K562 (cell line): ENCODE measurements at regions of chr3 and their contacts with region 1.

Region 1: DNA sequence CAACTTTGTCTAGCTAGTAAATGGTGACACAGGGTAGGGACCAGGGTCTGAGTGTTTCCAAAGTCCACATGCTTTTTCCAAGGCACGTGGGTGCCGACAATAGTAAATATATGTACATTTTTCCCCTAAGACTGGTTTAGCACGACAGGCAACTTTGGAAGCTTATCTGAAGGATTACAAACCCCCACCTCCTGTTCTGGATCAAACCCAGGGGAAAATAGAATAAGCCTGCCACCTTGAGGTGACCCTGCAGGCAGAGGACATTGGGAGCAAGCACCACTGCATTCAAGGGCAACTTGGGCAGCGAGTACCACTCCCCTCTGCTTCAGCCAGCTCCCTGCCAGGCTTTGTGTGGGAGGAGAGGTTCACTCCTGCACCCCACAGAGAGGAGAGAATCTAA is 44.8 kb downstream of the KBTBD12 start:
- DNase-seq: peak in 2 of 4 experiments; percentile 20 to 33
- ATAC-seq: 0 out of 3 replicates have a peak, but pooled peaks have one; percentile 42
- H3K4me3 ChIP-seq: no peak overlapping the region
- H3K27ac ChIP-seq: no peak overlapping the region
- H3K4me1 ChIP-seq: no peaks in the 10 kb centered on the region
- H3K27me3 ChIP-seq: peaks cover 0 to 7% of the 10 kb centered on the region in 2 experiments; a peak in 3 of 5 replicates
- CTCF ChIP-seq: peak; percentile 41 to 56 (median 50)
- EP300 ChIP-seq: no peak
- POLR2A ChIP-seq: no peak
- RAD21 ChIP-seq: peak; percentile 55 to 61; a peak in 3 of 4 replicates

Region 2: GRCh38 chr3:127011270-127011992 is 948.4 kb before region 1 on chr3:
- CTCF ChIA-PET with region 1: no interaction called
- POLR2A ChIA-PET with region 1: no interaction called
- in situ Hi-C with region 1: no loop called
- intact Hi-C with region 1: no loop called
- DNase-seq: peak in 1 of 4 experiments; percentile 16
- ATAC-seq: peak; percentile 79
- H3K4me3 ChIP-seq: no peak overlapping the region
- H3K27ac ChIP-seq: no peak overlapping the region; the same call in 2 of the 3 replicates
- H3K4me1 ChIP-seq: peaks cover 0 to 5% of the 10 kb centered on the region in 2 experiments; a peak in 1 of 5 replicates
- H3K27me3 ChIP-seq: no peaks in the 10 kb centered on the region
- CTCF ChIP-seq: no peak
- EP300 ChIP-seq: no peak
- POLR2A ChIP-seq: no peak
- RAD21 ChIP-seq: no peak

Region 3: GRCh38 chr3:127547761-127548605 is 411.9 kb before region 1 on chr3:
- CTCF ChIA-PET with region 1: no interaction called
- POLR2A ChIA-PET with region 1: no interaction called
- in situ Hi-C with region 1: no loop called
- intact Hi-C with region 1: no loop called
- DNase-seq: peak; percentile 54 to 80 (median 76)
- ATAC-seq: peak; percentile 88
- H3K4me3 ChIP-seq: peak overlapping the region; percentile 38
- H3K27ac ChIP-seq: no peak overlapping the region
- H3K4me1 ChIP-seq: peaks cover 0 to 16% of the 10 kb centered on the region in 2 experiments; a peak in 2 of 5 replicates
- H3K27me3 ChIP-seq: peaks cover 2 to 42% of the 10 kb centered on the region in 2 experiments; a peak in 3 of 5 replicates
- CTCF ChIP-seq: peak in 2 of 3 experiments; percentile 51 to 68; a peak in 5 of 6 replicates
- EP300 ChIP-seq: no peak
- POLR2A ChIP-seq: no peak
- RAD21 ChIP-seq: peak in 1 of 2 experiments; percentile 29; a peak in 3 of 4 replicates

Region 4: GRCh38 chr3:127574880-127575878 is 384.7 kb before region 1 on chr3:
- CTCF ChIA-PET with region 1: no interaction called
- POLR2A ChIA-PET with region 1: no interaction called
- in situ Hi-C with region 1: no loop called
- intact Hi-C with region 1: loop called (anchors 10 kb)
- DNase-seq: peak; percentile 84 to 90 (median 87)
- ATAC-seq: peak; percentile 98
- H3K4me3 ChIP-seq: no peak overlapping the region
- H3K27ac ChIP-seq: no peak overlapping the region
- H3K4me1 ChIP-seq: peaks cover 0 to 35% of the 10 kb centered on the region in 2 experiments; a peak in 3 of 5 replicates
- H3K27me3 ChIP-seq: no peaks in the 10 kb centered on the region
- CTCF ChIP-seq: peak; percentile 85 to 94 (median 92)
- EP300 ChIP-seq: no peak
- POLR2A ChIP-seq: no peak
- RAD21 ChIP-seq: peak; percentile 68 to 75

Region 5: GRCh38 chr3:127690823-127691452 is 268.9 kb before region 1 on chr3:
- CTCF ChIA-PET with region 1: no interaction called
- POLR2A ChIA-PET with region 1: no interaction called
- in situ Hi-C with region 1: no loop called
- intact Hi-C with region 1: loop called (anchors 10 kb)
- DNase-seq: peak in 1 of 4 experiments; percentile 46
- ATAC-seq: peak; percentile 99
- H3K4me3 ChIP-seq: no peak overlapping the region
- H3K27ac ChIP-seq: no peak overlapping the region
- H3K4me1 ChIP-seq: peaks cover 0 to 2% of the 10 kb centered on the region in 2 experiments; a peak in 1 of 5 replicates
- H3K27me3 ChIP-seq: peaks cover 0 to 25% of the 10 kb centered on the region in 2 experiments; a peak in 4 of 5 replicates
- CTCF ChIP-seq: peak; percentile 58 to 66 (median 61)
- EP300 ChIP-seq: no peak
- POLR2A ChIP-seq: no peak
- RAD21 ChIP-seq: peak; percentile 53 to 68

Region 6: GRCh38 chr3:128950223-128950938 is 990.5 kb after region 1 on chr3:
- CTCF ChIA-PET with region 1: no interaction called
- POLR2A ChIA-PET with region 1: no interaction called
- in situ Hi-C with region 1: no loop called
- intact Hi-C with region 1: no loop called
- DNase-seq: peak in 2 of 4 experiments; percentile 14
- ATAC-seq: peak; percentile 76
- H3K4me3 ChIP-seq: no peak overlapping the region
- H3K27ac ChIP-seq: no peak overlapping the region
- H3K4me1 ChIP-seq: no peaks in the 10 kb centered on the region
- H3K27me3 ChIP-seq: peaks cover 0 to 15% of the 10 kb centered on the region in 2 experiments; a peak in 2 of 5 replicates
- CTCF ChIP-seq: peak; percentile 28 to 37 (median 31); a peak in 3 of 6 replicates
- EP300 ChIP-seq: no peak
- POLR2A ChIP-seq: no peak
- RAD21 ChIP-seq: peak in 1 of 2 experiments; percentile 40; a peak in 1 of 4 replicates